H1 (cell line): ENCODE measurements at regions of chr6 and their contacts with region 1.

Region 1: DNA sequence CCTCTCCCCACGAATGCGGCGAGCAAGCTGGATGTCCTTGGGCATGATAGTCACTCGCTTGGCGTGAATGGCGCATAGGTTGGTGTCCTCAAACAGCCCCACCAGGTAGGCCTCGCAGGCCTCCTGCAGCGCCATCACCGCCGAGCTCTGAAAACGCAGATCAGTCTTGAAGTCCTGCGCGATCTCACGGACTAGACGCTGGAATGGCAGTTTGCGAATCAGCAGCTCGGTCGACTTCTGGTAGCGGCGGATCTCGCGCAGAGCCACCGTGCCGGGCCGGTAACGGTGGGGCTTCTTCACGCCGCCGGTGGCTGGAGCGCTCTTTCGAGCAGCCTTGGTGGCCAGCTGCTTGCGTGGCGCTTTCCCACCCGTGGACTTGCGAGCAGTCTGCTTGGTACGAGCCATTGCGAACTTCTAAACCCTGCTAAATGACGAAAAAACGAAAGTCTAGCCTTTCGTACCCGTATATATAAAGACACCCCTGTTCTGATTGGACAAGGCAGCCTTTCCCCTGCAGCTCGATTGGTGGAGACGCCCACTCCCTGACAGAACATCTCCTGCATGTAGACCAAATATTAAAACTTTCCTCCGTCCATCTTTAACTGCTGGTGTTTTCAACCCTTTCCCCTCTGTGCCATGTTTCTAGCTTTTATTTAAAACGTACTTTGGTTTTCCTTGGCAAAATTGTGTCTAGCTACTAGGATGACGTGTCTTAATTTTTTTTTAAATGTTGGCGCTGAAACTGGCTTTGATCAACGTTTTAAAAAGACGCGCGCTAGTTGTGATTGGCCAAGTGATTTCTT is 109.8 kb downstream of the HFE start:
- DNase-seq: peak in 1 of 2 experiments; percentile 76
- H3K4me3 ChIP-seq: peak overlapping the region; percentile 85 to 98 (median 89)
- H3K27ac ChIP-seq: peak overlapping the region; percentile 82
- H3K4me1 ChIP-seq: peaks cover 0 to 1% (median 0%) of the 10 kb centered on the region in 4 experiments; a peak in 1 of 7 replicates
- H3K27me3 ChIP-seq: no peaks in the 10 kb centered on the region
- CTCF ChIP-seq: no peak
- EP300 ChIP-seq: no peak
- POLR2A ChIP-seq: peak; percentile 99
- RAD21 ChIP-seq: no peak

Region 2: GRCh38 chr6:26045065-26045927 is 151.8 kb before region 1 on chr6:
- CTCF ChIA-PET with region 1: no interaction called
- POLR2A ChIA-PET with region 1: interaction called, 27 read pairs
- DNase-seq: no peak
- H3K4me3 ChIP-seq: no peak overlapping the region
- H3K27ac ChIP-seq: 0 out of 2 replicates have a peak overlapping the region, but pooled peaks have one; percentile 22
- H3K4me1 ChIP-seq: peaks cover 0 to 6% (median under 1%) of the 10 kb centered on the region in 4 experiments; a peak in 1 of 7 replicates
- H3K27me3 ChIP-seq: no peaks in the 10 kb centered on the region
- CTCF ChIP-seq: peak in 1 of 3 experiments; percentile 1; a peak in 1 of 4 replicates
- EP300 ChIP-seq: no peak
- POLR2A ChIP-seq: no peak
- RAD21 ChIP-seq: no peak

Region 3: DNA sequence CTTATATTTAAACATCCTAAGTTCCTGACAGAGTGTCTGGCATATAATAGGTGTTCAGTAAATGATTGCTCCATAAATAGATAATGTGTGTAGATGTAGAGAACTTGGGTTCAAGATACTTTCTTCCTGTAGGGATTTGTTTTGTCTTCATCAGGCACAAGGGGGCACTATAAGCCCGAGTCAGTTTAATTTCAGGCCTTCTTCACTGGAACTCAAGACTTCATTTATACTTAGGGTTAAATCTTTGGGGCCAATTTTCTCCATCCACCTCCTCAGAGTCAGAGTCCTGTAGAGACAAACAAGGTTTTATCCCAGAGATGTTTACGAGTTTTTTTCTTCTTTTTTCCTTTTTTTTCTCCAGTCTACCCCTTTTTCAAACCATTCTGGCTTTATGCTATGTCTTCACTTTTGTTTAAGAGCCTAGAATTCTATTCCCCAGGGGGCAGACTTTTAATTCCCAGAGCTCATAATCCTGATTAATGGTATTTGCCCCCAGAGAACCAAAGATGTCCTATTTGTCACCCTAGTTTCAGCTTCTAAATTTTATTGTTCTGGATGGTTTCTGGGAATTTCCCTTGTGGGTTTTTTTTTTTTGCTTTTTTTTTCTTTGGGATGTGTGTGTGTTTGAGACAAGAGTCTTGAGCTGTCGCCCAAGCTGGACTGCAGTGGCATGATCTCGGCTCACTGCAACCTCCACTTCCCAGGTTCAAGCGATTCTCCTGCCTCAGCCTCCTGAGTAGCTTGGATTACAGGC is 21.4 kb before region 1 on chr6:
- CTCF ChIA-PET with region 1: interaction called, 8 read pairs
- POLR2A ChIA-PET with region 1: interaction called, 2,060 read pairs
- DNase-seq: peak in 1 of 2 experiments; percentile 54
- H3K4me3 ChIP-seq: 0 out of 8 replicates have a peak overlapping the region, but pooled peaks of 1 of the 4 experiments have one; percentile 14
- H3K27ac ChIP-seq: no peak overlapping the region
- H3K4me1 ChIP-seq: peaks cover 0 to 2% (median 0%) of the 10 kb centered on the region in 4 experiments; a peak in 3 of 7 replicates
- H3K27me3 ChIP-seq: no peaks in the 10 kb centered on the region
- CTCF ChIP-seq: peak in 2 of 3 experiments; percentile 51 to 65; a peak in 2 of 4 replicates
- EP300 ChIP-seq: no peak
- POLR2A ChIP-seq: no peak
- RAD21 ChIP-seq: peak; percentile 79 to 83

Region 4: GRCh38 chr6:26234421-26235296 is 37.6 kb after region 1 on chr6:
- CTCF ChIA-PET with region 1: interaction called, 3 read pairs
- POLR2A ChIA-PET with region 1: interaction called, 477 read pairs
- DNase-seq: peak in 1 of 2 experiments; percentile 85
- H3K4me3 ChIP-seq: peak overlapping the region; percentile 83 to 91 (median 88)
- H3K27ac ChIP-seq: peak overlapping the region; percentile 93
- H3K4me1 ChIP-seq: peaks cover 0 to 3% (median 0%) of the 10 kb centered on the region in 4 experiments; a peak in 3 of 7 replicates
- H3K27me3 ChIP-seq: no peaks in the 10 kb centered on the region
- CTCF ChIP-seq: no peak
- EP300 ChIP-seq: no peak
- POLR2A ChIP-seq: peak; percentile 86
- RAD21 ChIP-seq: no peak

Region 5: DNA sequence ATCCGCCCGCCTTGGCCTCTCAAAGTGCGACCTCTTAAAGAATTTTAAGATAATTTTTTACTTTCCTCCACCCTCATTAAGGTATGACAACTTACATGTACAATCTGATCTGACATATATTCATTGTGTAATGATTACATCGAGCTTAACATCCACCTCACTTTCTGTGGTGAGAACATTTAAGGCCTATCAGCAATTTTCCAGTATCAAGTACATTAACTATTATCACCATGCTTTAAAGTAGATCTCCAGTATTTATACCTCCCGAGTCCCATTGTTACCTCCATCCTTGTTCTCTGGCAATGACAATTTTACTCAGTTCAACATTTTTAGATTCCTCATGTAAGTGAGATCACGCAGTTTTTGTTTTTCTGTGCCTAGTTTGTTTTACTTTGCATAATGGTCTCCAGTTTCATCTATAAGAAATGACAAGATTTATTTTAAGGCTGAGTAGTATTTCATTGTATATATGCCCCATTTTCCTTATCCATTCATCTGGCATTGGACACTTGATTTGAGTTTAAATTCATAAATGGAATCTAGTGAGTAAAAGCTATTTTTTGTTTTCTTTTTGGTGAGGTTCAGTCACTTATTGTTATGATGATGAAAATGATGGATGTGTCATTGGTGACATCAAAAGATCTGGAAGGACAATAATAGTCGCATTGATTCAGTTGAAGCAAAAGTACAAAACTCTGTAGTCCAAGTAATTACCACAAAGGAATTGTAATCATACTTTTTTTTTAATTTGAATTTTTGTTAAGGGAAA is 1628.2 kb after region 1 on chr6:
- CTCF ChIA-PET with region 1: no interaction called
- POLR2A ChIA-PET with region 1: interaction called, 26 read pairs
- DNase-seq: no peak
- H3K4me3 ChIP-seq: peak overlapping the region; percentile 59 to 90 (median 81)
- H3K27ac ChIP-seq: peak overlapping the region; percentile 95; the same call in 1 of the 2 replicates
- H3K4me1 ChIP-seq: peaks cover 0 to 3% (median 0%) of the 10 kb centered on the region in 4 experiments; a peak in 1 of 7 replicates
- H3K27me3 ChIP-seq: no peaks in the 10 kb centered on the region
- CTCF ChIP-seq: no peak
- EP300 ChIP-seq: no peak
- POLR2A ChIP-seq: peak in 1 of 2 experiments; percentile 32; a peak in 2 of 3 replicates
- RAD21 ChIP-seq: no peak